ENCODE measurements at regions of chr20 and their contacts with region 1.

Region 1: GRCh38 chr20:46939031-46939965 is 44.7 kb downstream of the EYA2 start:
- DNase-seq: no peak
- ATAC-seq: no peak
- H3K4me3 ChIP-seq: no peak overlapping the region
- H3K27ac ChIP-seq: no peak overlapping the region
- H3K4me1 ChIP-seq: no peaks in the 10 kb centered on the region
- H3K27me3 ChIP-seq: no peaks in the 10 kb centered on the region
- CTCF ChIP-seq: no peak
- POLR2A ChIP-seq: no peak

Region 2: GRCh38 chr20:47038566-47039560 is 99.6 kb after region 1 on chr20:
- in situ Hi-C with region 1: loop called in 1 of 4 experiments (anchors 25 kb)
- intact Hi-C with region 1: no loop called
- DNase-seq: peak in 1 of 2 donors; percentile 26
- ATAC-seq: peak in 1 of 2 donors; percentile 55
- H3K4me3 ChIP-seq: no peak overlapping the region
- H3K27ac ChIP-seq: no peak overlapping the region
- H3K4me1 ChIP-seq: no peaks in the 10 kb centered on the region
- H3K27me3 ChIP-seq: no peaks in the 10 kb centered on the region
- CTCF ChIP-seq: no peak
- POLR2A ChIP-seq: no peak